Panc1 (cell line): ENCODE measurements at regions of chr1 and their contacts with region 1.

Region 1: GRCh38 chr1:84944767-84945486 is 51.9 kb upstream of the LPAR3 start:
- DNase-seq: peak; percentile 94
- ATAC-seq: peak; percentile 96
- H3K4me3 ChIP-seq: peak overlapping the region; percentile 24 to 34
- H3K27ac ChIP-seq: peak overlapping the region; percentile 74
- H3K4me1 ChIP-seq: no peaks in the 10 kb centered on the region
- H3K27me3 ChIP-seq: no peaks in the 10 kb centered on the region
- CTCF ChIP-seq: peak; percentile 100

Region 2: GRCh38 chr1:85027242-85027983 is 82.5 kb after region 1 on chr1:
- CTCF ChIA-PET with region 1: interaction called, 83 read pairs
- POLR2A ChIA-PET with region 1: interaction called, 4 read pairs
- in situ Hi-C with region 1: no loop called
- intact Hi-C with region 1: loop called (anchors 1 kb)
- DNase-seq: peak; percentile 24
- ATAC-seq: peak; percentile 93
- H3K4me3 ChIP-seq: no peak overlapping the region
- H3K27ac ChIP-seq: no peak overlapping the region
- H3K4me1 ChIP-seq: no peaks in the 10 kb centered on the region
- H3K27me3 ChIP-seq: no peaks in the 10 kb centered on the region
- CTCF ChIP-seq: peak; percentile 60

Region 3: DNA sequence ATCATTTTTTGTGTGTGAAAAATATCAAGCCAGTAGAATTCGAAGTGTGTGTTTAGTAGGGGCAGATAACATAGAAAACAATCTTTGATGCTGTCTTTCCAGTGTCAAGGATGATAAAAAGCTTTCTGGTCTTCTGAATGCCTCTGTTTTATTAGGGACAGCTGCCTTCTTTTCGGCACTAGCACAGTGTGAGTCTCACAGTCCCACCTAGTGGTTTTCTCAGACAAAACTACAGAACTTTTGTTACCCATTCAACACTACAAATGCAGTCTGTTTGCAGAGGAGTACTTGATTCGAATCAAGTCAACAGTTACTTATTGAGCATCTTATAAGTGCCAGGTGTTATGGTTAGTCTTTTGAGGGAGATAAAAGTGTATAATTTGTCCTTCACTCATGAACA is 134.0 kb after region 1 on chr1:
- CTCF ChIA-PET with region 1: interaction called, 3 read pairs
- POLR2A ChIA-PET with region 1: no interaction called
- in situ Hi-C with region 1: no loop called
- intact Hi-C with region 1: loop called (anchors 1 kb)
- DNase-seq: no peak
- ATAC-seq: peak; percentile 83
- H3K4me3 ChIP-seq: no peak overlapping the region
- H3K27ac ChIP-seq: no peak overlapping the region
- H3K4me1 ChIP-seq: no peaks in the 10 kb centered on the region
- H3K27me3 ChIP-seq: peaks cover 4% of the 10 kb centered on the region; the same call in 1 of the 2 replicates
- CTCF ChIP-seq: peak; percentile 38; the same call in 1 of the 2 replicates

Region 4: DNA sequence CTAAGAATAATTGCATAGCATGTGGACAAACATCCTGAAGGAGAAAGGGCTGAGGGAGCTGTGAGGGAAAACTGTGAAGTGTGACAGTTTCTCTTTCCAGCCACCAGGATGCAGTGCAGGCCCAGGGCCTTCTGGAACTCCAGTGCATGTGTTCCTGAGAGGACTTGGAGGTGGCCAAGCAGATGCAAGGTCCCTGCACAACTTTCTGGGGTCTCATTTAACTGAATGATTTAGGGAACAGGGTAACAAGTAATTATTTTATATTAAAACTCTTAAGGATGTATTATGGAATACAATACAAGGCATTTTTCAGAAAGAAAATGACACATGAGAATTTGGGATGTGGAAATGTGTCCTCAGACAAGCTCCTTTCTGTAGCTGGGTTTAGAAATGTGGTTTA is 164.5 kb after region 1 on chr1:
- CTCF ChIA-PET with region 1: interaction called, 13 read pairs
- POLR2A ChIA-PET with region 1: no interaction called
- in situ Hi-C with region 1: no loop called
- intact Hi-C with region 1: no loop called
- DNase-seq: peak; percentile 60
- ATAC-seq: peak; percentile 100
- H3K4me3 ChIP-seq: no peak overlapping the region
- H3K27ac ChIP-seq: no peak overlapping the region
- H3K4me1 ChIP-seq: no peaks in the 10 kb centered on the region
- H3K27me3 ChIP-seq: peaks cover 5% of the 10 kb centered on the region; the same call in 1 of the 2 replicates
- CTCF ChIP-seq: peak; percentile 100

Region 5: GRCh38 chr1:85230305-85230980 is 285.5 kb after region 1 on chr1:
- CTCF ChIA-PET with region 1: interaction called, 13 read pairs
- POLR2A ChIA-PET with region 1: no interaction called
- in situ Hi-C with region 1: no loop called
- intact Hi-C with region 1: no loop called
- DNase-seq: no peak
- ATAC-seq: peak; percentile 82
- H3K4me3 ChIP-seq: no peak overlapping the region
- H3K27ac ChIP-seq: no peak overlapping the region
- H3K4me1 ChIP-seq: no peaks in the 10 kb centered on the region
- H3K27me3 ChIP-seq: no peaks in the 10 kb centered on the region
- CTCF ChIP-seq: peak; percentile 79